CD4-positive, alpha-beta memory T cell (primary cell): ENCODE measurements at regions of chr2 and their contacts with region 1.

Region 1: GRCh38 chr2:196277002-196277401 is 105.6 kb upstream of the STK17B start:
- DNase-seq: peak; percentile 46 to 70 (median 64)
- H3K4me3 ChIP-seq: no peak overlapping the region
- H3K4me3 Mint-ChIP-seq: peak overlapping the region in 5 of 8 donors; percentile 0 to 75 (median 40)
- H3K27ac ChIP-seq: peak overlapping the region; percentile 34
- H3K27ac Mint-ChIP-seq: peak overlapping the region; percentile 21 to 95 (median 81)
- H3K4me1 ChIP-seq: peaks cover 38% of the 10 kb centered on the region
- H3K4me1 Mint-ChIP-seq: peaks cover 30 to 60% (median 36%) of the 10 kb centered on the region in 4 donors
- H3K27me3 ChIP-seq: no peaks in the 10 kb centered on the region
- H3K27me3 Mint-ChIP-seq: no peaks in the 10 kb centered on the region

Region 2: DNA sequence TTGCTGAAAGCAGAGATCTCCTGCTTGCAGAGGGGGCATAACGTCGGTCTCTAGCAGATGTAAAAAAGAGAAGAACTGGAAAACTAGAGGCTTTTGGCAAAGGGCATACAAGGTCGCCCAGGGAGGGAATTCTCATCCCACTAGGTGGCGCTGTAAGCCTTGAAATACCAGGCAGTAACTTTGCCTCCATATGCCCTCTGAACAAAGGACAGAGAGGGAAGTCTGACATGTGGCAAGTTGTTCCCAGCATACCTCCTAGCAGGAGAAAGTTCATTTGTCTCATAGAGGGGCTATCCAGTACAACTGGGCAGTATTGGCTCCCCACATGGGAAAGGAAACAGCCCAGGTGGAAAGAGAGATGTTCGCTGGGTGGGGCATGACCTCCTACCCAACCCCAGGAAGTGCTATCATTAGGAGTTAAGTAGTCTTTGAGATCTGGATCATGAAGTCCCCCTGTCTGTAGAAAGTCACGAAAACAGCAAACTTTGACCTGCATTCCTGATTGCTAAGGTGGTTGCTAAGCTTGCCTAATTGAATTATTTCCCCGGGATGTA is 145.5 kb before region 1 on chr2:
- CTCF ChIA-PET with region 1: interaction called, 7 read pairs
- POLR2A ChIA-PET with region 1: interaction called, 11 read pairs
- intact Hi-C with region 1: loop called (anchors 1 kb)
- DNase-seq: peak; percentile 50 to 64 (median 60)
- H3K4me3 ChIP-seq: no peak overlapping the region
- H3K4me3 Mint-ChIP-seq: peak overlapping the region in 6 of 8 donors; percentile 6 to 62 (median 34)
- H3K27ac ChIP-seq: peak overlapping the region; percentile 33
- H3K27ac Mint-ChIP-seq: peak overlapping the region in 6 of 7 donors; percentile 66 to 94 (median 89)
- H3K4me1 ChIP-seq: peaks cover 12% of the 10 kb centered on the region
- H3K4me1 Mint-ChIP-seq: peaks cover 3 to 18% (median 10%) of the 10 kb centered on the region in 4 donors
- H3K27me3 ChIP-seq: no peaks in the 10 kb centered on the region
- H3K27me3 Mint-ChIP-seq: no peaks in the 10 kb centered on the region

Region 3: DNA sequence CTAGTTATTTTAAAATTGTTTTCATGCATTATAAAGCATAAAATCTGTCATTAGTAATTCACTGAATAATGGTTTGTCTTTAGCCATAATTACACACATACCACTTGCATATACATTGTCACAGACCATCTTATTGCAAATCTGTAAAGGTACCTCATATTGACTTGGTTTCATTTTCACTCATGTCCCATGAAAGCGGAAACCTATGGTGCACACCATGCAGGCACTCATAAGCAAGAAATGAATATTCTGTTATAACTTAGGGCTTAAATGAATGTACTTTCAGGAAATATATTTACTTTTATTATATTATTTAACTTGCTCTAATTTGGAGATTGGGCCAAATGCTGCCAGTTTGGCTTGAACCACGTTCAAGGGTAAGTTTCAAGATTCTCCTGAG is 76.4 kb before region 1 on chr2:
- CTCF ChIA-PET with region 1: interaction called, 6 read pairs
- POLR2A ChIA-PET with region 1: interaction called, 19 read pairs
- intact Hi-C with region 1: no loop called
- DNase-seq: peak; percentile 45 to 55 (median 50)
- H3K4me3 ChIP-seq: peak overlapping the region; percentile 43 to 57
- H3K4me3 Mint-ChIP-seq: peak overlapping the region; percentile 74 to 92 (median 80)
- H3K27ac ChIP-seq: peak overlapping the region; percentile 70
- H3K27ac Mint-ChIP-seq: peak overlapping the region; percentile 72 to 98 (median 95)
- H3K4me1 ChIP-seq: peaks cover 63% of the 10 kb centered on the region
- H3K4me1 Mint-ChIP-seq: peaks cover 37 to 58% (median 44%) of the 10 kb centered on the region in 4 donors
- H3K27me3 ChIP-seq: no peaks in the 10 kb centered on the region
- H3K27me3 Mint-ChIP-seq: no peaks in the 10 kb centered on the region

Region 4: GRCh38 chr2:196233021-196233804 is 43.8 kb before region 1 on chr2:
- CTCF ChIA-PET with region 1: interaction called, 67 read pairs
- POLR2A ChIA-PET with region 1: interaction called, 64 read pairs
- intact Hi-C with region 1: no loop called
- DNase-seq: no peak
- H3K4me3 ChIP-seq: no peak overlapping the region
- H3K4me3 Mint-ChIP-seq: peak overlapping the region in 6 of 8 donors; percentile 21 to 41 (median 32)
- H3K27ac ChIP-seq: peak overlapping the region; percentile 33
- H3K27ac Mint-ChIP-seq: peak overlapping the region; percentile 83 to 99 (median 93)
- H3K4me1 ChIP-seq: peaks cover 96% of the 10 kb centered on the region
- H3K4me1 Mint-ChIP-seq: peaks cover 65 to 97% (median 79%) of the 10 kb centered on the region in 4 donors
- H3K27me3 ChIP-seq: no peaks in the 10 kb centered on the region
- H3K27me3 Mint-ChIP-seq: no peaks in the 10 kb centered on the region

Region 5: GRCh38 chr2:196263181-196263747 is 13.7 kb before region 1 on chr2:
- CTCF ChIA-PET with region 1: interaction called, 21 read pairs
- POLR2A ChIA-PET with region 1: interaction called, 51 read pairs
- intact Hi-C with region 1: loop called (anchors 1 kb)
- DNase-seq: peak; percentile 72 to 82 (median 78)
- H3K4me3 ChIP-seq: peak overlapping the region in 1 of 2 donors; percentile 33
- H3K4me3 Mint-ChIP-seq: peak overlapping the region; percentile 63 to 91 (median 79)
- H3K27ac ChIP-seq: peak overlapping the region; percentile 78
- H3K27ac Mint-ChIP-seq: peak overlapping the region; percentile 85 to 99 (median 97)
- H3K4me1 ChIP-seq: peaks cover 93% of the 10 kb centered on the region
- H3K4me1 Mint-ChIP-seq: peaks cover 59 to 83% (median 71%) of the 10 kb centered on the region in 4 donors
- H3K27me3 ChIP-seq: no peaks in the 10 kb centered on the region
- H3K27me3 Mint-ChIP-seq: no peaks in the 10 kb centered on the region

Region 6: GRCh38 chr2:196453613-196454047 is 176.6 kb after region 1 on chr2:
- CTCF ChIA-PET with region 1: no interaction called
- POLR2A ChIA-PET with region 1: no interaction called
- intact Hi-C with region 1: loop called (anchors 5 kb)
- DNase-seq: peak in 4 of 5 donors; percentile 14 to 26 (median 20)
- H3K4me3 ChIP-seq: no peak overlapping the region
- H3K4me3 Mint-ChIP-seq: no peak overlapping the region
- H3K27ac ChIP-seq: no peak overlapping the region
- H3K27ac Mint-ChIP-seq: no peak overlapping the region
- H3K4me1 ChIP-seq: no peaks in the 10 kb centered on the region
- H3K4me1 Mint-ChIP-seq: peaks cover 0 to 4% (median 1%) of the 10 kb centered on the region in 4 donors
- H3K27me3 ChIP-seq: peaks cover 8% of the 10 kb centered on the region
- H3K27me3 Mint-ChIP-seq: peaks cover 13 to 24% of the 10 kb centered on the region in 2 donors